IMR-90 (cell line): ENCODE measurements at regions of chr11 and their contacts with region 1.

Region 1: GRCh38 chr11:9972989-9973388 is 309.1 kb downstream of the SWAP70 start:
- DNase-seq: peak; percentile 70
- ATAC-seq: peak; percentile 70
- H3K4me3 ChIP-seq: no peak overlapping the region
- H3K27ac ChIP-seq: no peak overlapping the region
- H3K4me1 ChIP-seq: peaks cover 12% of the 10 kb centered on the region; the same call in 1 of the 2 replicates
- H3K27me3 ChIP-seq: no peaks in the 10 kb centered on the region
- CTCF ChIP-seq: peak; percentile 75
- POLR2A ChIP-seq: no peak
- RAD21 ChIP-seq: peak; percentile 85

Region 2: DNA sequence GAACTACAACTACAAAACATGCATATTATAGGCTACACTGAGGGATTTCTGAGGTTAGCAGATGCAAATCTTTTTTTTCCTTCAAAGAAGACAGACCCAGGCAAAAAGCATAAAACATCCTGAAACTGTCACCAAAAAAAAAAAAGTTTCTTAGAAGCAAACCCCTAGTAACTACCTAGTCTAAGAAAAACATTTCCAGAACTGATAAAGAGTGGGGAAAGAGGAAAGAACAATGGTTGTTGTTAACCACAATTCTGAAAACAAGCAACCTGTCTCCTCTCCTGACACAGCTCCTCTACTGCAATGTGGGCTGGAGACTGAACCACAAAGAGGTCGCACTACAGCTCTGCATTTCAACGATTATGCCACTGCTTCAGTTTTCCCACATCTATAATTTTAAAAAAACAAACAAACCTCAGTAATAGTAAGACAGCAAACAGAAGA is 722.8 kb before region 1 on chr11:
- CTCF ChIA-PET with region 1: no interaction called
- POLR2A ChIA-PET with region 1: no interaction called
- dilution Hi-C with region 1: no loop called
- in situ Hi-C with region 1: no loop called
- intact Hi-C with region 1: no loop called
- DNase-seq: no peak
- ATAC-seq: no peak
- H3K4me3 ChIP-seq: no peak overlapping the region
- H3K27ac ChIP-seq: no peak overlapping the region
- H3K4me1 ChIP-seq: 0 out of 2 replicates have a peak, but pooled peaks cover 1% of the 10 kb centered on the region
- H3K27me3 ChIP-seq: no peaks in the 10 kb centered on the region
- CTCF ChIP-seq: no peak
- POLR2A ChIP-seq: no peak
- RAD21 ChIP-seq: no peak

Region 3: GRCh38 chr11:9765320-9766020 is 207.5 kb before region 1 on chr11:
- CTCF ChIA-PET with region 1: interaction called, 11 read pairs
- POLR2A ChIA-PET with region 1: no interaction called
- dilution Hi-C with region 1: no loop called
- in situ Hi-C with region 1: loop called (anchors 25 kb)
- intact Hi-C with region 1: no loop called
- DNase-seq: peak; percentile 95
- ATAC-seq: peak; percentile 90
- H3K4me3 ChIP-seq: no peak overlapping the region
- H3K27ac ChIP-seq: peak overlapping the region; percentile 98
- H3K4me1 ChIP-seq: peaks cover 35% of the 10 kb centered on the region
- H3K27me3 ChIP-seq: no peaks in the 10 kb centered on the region
- CTCF ChIP-seq: no peak
- POLR2A ChIP-seq: no peak
- RAD21 ChIP-seq: no peak

Region 4: GRCh38 chr11:10026514-10026913 is 53.5 kb after region 1 on chr11:
- CTCF ChIA-PET with region 1: no interaction called
- POLR2A ChIA-PET with region 1: no interaction called
- dilution Hi-C with region 1: no loop called
- in situ Hi-C with region 1: no loop called
- intact Hi-C with region 1: no loop called
- DNase-seq: peak; percentile 77
- ATAC-seq: peak; percentile 91
- H3K4me3 ChIP-seq: no peak overlapping the region
- H3K27ac ChIP-seq: peak overlapping the region; percentile 65; the same call in 1 of the 2 replicates
- H3K4me1 ChIP-seq: peaks cover 9% of the 10 kb centered on the region
- H3K27me3 ChIP-seq: no peaks in the 10 kb centered on the region
- CTCF ChIP-seq: no peak
- POLR2A ChIP-seq: no peak
- RAD21 ChIP-seq: no peak

Region 5: DNA sequence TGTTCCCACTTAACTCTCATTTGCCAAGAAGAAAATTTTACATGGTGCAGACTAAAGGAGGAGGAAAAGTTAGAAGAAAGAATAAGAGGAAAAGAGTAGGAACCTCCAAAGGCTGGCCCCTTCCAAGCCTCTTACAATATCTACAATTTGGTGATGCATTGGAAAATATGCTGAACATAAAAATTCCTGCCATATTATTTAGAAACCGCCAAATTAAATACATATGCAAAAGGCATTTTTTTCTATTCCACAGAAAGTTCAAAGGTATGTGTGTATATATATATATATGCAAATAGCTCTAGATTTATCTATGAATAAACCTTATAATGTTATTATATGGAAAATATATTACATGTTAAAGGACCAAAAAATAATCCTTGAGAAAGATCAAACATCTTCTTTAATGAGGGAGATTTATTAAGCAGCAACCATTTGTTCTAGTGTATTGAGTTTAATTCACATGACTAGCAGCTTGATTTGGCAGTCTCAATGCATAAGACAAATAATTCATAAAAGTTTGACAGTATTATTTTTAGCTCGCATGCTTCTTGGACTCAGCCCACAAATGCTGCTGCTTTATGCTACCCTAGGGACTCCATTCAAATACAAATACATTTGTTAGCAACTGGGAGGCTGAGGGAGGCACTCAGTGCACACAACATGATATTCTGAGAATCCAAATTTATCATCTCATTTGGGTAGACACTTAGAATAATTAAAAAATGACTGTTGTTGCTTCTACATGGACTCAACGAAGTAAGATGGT is 136.1 kb after region 1 on chr11:
- CTCF ChIA-PET with region 1: no interaction called
- POLR2A ChIA-PET with region 1: no interaction called
- dilution Hi-C with region 1: no loop called
- in situ Hi-C with region 1: no loop called
- intact Hi-C with region 1: no loop called
- DNase-seq: peak; percentile 40
- ATAC-seq: peak; percentile 46; the same call in 1 of the 2 replicates
- H3K4me3 ChIP-seq: no peak overlapping the region
- H3K27ac ChIP-seq: no peak overlapping the region
- H3K4me1 ChIP-seq: peaks cover 6% of the 10 kb centered on the region; the same call in 1 of the 2 replicates
- H3K27me3 ChIP-seq: no peaks in the 10 kb centered on the region
- CTCF ChIP-seq: no peak
- POLR2A ChIP-seq: no peak
- RAD21 ChIP-seq: no peak

Region 6: DNA sequence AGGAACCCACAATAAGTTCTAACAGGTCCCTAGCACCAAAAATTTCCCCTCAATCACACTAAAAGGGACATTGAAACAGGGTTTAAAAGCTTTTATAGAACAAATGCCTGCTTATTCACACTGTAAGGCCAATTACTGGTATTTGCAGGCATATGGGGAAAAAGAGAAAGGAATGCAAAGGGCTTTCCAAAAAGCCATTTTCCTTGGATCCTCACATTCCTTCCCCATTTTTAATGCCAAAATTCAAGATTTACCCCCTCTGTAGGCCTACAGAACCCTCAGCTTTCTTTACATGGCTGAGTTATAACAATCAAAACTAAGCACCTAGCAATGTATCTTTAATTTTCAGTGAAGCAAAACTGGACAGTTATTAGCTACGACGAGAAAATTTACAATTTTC is 219.0 kb after region 1 on chr11:
- CTCF ChIA-PET with region 1: no interaction called
- POLR2A ChIA-PET with region 1: no interaction called
- dilution Hi-C with region 1: no loop called
- in situ Hi-C with region 1: no loop called
- intact Hi-C with region 1: no loop called
- DNase-seq: no peak
- ATAC-seq: no peak
- H3K4me3 ChIP-seq: no peak overlapping the region
- H3K27ac ChIP-seq: no peak overlapping the region
- H3K4me1 ChIP-seq: no peaks in the 10 kb centered on the region
- H3K27me3 ChIP-seq: no peaks in the 10 kb centered on the region
- CTCF ChIP-seq: no peak
- POLR2A ChIP-seq: no peak
- RAD21 ChIP-seq: no peak